ENCODE measurements at regions of chr4 and their contacts with region 1.

Region 1: DNA sequence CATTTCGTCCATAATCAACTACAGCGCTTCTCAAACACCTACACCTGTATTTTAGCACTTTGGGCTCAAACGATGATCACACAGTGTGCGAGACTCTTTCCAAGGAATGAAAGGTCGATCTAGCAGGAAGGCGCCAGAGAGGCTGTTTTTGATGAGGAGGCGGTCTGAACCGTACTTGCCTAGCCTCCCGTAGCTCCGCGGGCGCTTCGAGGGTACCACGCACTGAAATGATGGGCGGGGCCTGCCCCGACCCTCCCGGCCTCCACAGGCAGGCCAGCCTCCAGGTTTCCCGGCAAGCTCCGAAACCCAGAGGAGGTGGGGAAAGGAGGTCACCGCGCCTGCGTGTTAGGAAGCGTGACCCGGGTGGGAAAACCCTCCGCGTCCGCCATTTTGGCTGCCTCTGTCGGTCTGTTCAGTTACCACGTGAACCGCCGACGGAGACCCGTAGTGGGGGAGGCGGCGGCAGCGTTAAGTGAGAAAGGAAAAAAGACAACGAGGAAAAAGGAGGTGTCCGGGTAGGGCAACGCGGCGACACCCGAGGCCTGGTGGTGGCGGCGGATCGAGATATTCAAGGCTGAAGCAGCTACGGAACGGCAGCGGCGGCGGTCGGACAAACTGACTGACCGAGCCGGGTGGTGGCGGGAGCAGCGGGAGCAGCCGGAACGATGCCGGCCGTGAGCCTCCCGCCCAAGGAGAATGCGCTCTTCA is at the start of gene NAA15:
- DNase-seq: peak; percentile 97 to 98 (median 98)
- H3K4me3 ChIP-seq: peak within 1 kb of the TSS; percentile 90
- H3K4me3 Mint-ChIP-seq: peak within 1 kb of the TSS; percentile 96 to 100 (median 99)
- H3K27ac ChIP-seq: peak within 1 kb of the TSS; percentile 89
- H3K27ac Mint-ChIP-seq: peak within 1 kb of the TSS; percentile 97 to 100 (median 99)
- H3K4me1 ChIP-seq: peaks cover 34% of the 10 kb centered on the region
- H3K4me1 Mint-ChIP-seq: peaks cover 51 to 69% (median 68%) of the 10 kb centered on the region in 3 donors
- H3K27me3 ChIP-seq: no peaks in the 10 kb centered on the region
- H3K27me3 Mint-ChIP-seq: peaks cover 0 to 1% of the 10 kb centered on the region in 2 donors
- total RNA-seq, gene NAA15: 116 to 122 TPM

Region 2: GRCh38 chr4:139083956-139084803 is 217.1 kb before region 1 on chr4:
- CTCF ChIA-PET with region 1: interaction called, 6 read pairs
- POLR2A ChIA-PET with region 1: interaction called, 25 read pairs
- DNase-seq: peak; percentile 70 to 90 (median 83)
- H3K4me3 ChIP-seq: peak overlapping the region; percentile 98
- H3K4me3 Mint-ChIP-seq: peak overlapping the region; percentile 87 to 100 (median 92)
- H3K27ac ChIP-seq: peak overlapping the region; percentile 94
- H3K27ac Mint-ChIP-seq: peak overlapping the region; percentile 88 to 100 (median 98)
- H3K4me1 ChIP-seq: peaks cover 31% of the 10 kb centered on the region
- H3K4me1 Mint-ChIP-seq: peaks cover 38 to 52% (median 46%) of the 10 kb centered on the region in 3 donors
- H3K27me3 ChIP-seq: no peaks in the 10 kb centered on the region
- H3K27me3 Mint-ChIP-seq: peaks cover 0 to 4% of the 10 kb centered on the region in 2 donors

Region 3: DNA sequence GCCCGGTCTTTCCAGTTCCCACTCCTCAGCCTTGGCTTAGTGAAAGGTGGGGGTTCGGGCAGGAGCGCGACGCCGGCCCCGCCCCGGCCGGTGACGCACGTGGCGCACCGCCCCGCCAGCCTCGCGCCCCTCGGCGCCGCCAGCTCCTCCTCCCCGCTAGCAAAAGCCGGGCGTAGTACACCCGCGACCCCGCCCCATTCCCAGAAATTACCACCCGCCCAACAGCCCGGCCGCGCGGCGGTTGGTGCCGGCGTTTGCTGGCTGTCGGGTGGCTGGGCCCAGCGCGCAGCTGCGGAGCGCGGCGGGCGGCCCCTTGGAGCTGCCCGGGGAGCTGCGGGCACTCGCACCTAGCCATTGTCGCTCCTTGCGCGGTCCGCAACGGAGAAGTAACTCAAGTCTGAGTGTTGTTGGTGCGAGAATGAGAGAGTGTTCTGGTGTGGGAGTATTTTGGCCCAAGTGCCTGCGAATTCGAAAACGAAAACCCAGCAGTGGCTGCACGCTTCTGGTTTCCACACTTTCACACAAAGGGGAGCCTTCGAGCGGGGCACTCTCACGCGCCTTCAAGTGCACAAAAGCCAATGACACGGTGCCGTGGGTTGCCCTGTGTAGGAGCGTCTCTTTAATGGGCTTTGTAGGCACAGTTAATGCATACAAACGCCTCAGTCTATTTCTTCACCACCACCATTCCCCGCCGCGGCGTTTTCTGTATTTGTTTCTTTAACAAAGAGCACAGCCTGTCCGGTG is 123.2 kb before region 1 on chr4:
- CTCF ChIA-PET with region 1: interaction called, 6 read pairs
- POLR2A ChIA-PET with region 1: interaction called, 25 read pairs
- DNase-seq: peak; percentile 81 to 90 (median 89)
- H3K4me3 ChIP-seq: peak overlapping the region; percentile 96
- H3K4me3 Mint-ChIP-seq: peak overlapping the region; percentile 89 to 97 (median 92)
- H3K27ac ChIP-seq: peak overlapping the region; percentile 87
- H3K27ac Mint-ChIP-seq: peak overlapping the region; percentile 84 to 98 (median 94)
- H3K4me1 ChIP-seq: peaks cover 10% of the 10 kb centered on the region
- H3K4me1 Mint-ChIP-seq: peaks cover 21 to 28% (median 27%) of the 10 kb centered on the region in 3 donors
- H3K27me3 ChIP-seq: no peaks in the 10 kb centered on the region
- H3K27me3 Mint-ChIP-seq: no peaks in the 10 kb centered on the region

Region 4: DNA sequence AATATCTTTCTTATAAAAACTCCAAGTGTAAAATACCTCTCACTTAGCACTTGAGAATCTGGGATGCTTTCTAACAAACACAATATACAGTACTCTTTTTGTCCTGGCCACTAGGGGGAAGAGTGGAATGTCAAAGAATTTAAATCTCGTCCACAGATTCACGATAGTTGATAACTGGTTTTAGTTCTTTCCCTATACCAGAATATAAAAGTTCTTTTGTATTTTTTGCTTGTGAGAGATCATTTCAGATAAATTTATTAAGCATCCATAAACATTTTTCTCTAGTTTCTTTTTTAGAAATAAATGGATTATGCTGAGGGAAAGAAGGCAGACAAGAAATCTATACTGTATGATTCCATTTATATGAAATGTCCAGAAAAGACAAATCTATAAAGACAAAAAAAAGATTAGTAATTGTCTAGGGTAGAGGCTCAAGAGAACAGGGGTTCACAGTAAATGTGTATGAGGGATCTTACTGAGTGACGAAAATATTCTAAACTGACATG is 71.7 kb before region 1 on chr4:
- CTCF ChIA-PET with region 1: interaction called, 23 read pairs
- POLR2A ChIA-PET with region 1: interaction called, 7 read pairs
- DNase-seq: peak in 2 of 5 donors; percentile 34 to 45
- H3K4me3 ChIP-seq: no peak overlapping the region
- H3K4me3 Mint-ChIP-seq: no peak overlapping the region
- H3K27ac ChIP-seq: no peak overlapping the region
- H3K27ac Mint-ChIP-seq: no peak overlapping the region
- H3K4me1 ChIP-seq: no peaks in the 10 kb centered on the region
- H3K4me1 Mint-ChIP-seq: peaks cover 2 to 5% (median 5%) of the 10 kb centered on the region in 3 donors
- H3K27me3 ChIP-seq: no peaks in the 10 kb centered on the region
- H3K27me3 Mint-ChIP-seq: no peaks in the 10 kb centered on the region

Region 5: GRCh38 chr4:139453371-139454110 is 152.3 kb after region 1 on chr4:
- CTCF ChIA-PET with region 1: no interaction called
- POLR2A ChIA-PET with region 1: interaction called, 13 read pairs
- DNase-seq: peak; percentile 94 to 98 (median 97)
- H3K4me3 ChIP-seq: peak overlapping the region; percentile 92
- H3K4me3 Mint-ChIP-seq: peak overlapping the region; percentile 87 to 99 (median 96)
- H3K27ac ChIP-seq: peak overlapping the region; percentile 96
- H3K27ac Mint-ChIP-seq: peak overlapping the region; percentile 98 to 99 (median 99)
- H3K4me1 ChIP-seq: peaks cover 51% of the 10 kb centered on the region
- H3K4me1 Mint-ChIP-seq: peaks cover 61 to 65% (median 61%) of the 10 kb centered on the region in 3 donors
- H3K27me3 ChIP-seq: no peaks in the 10 kb centered on the region
- H3K27me3 Mint-ChIP-seq: peaks cover 0 to 2% of the 10 kb centered on the region in 2 donors

Region 6: DNA sequence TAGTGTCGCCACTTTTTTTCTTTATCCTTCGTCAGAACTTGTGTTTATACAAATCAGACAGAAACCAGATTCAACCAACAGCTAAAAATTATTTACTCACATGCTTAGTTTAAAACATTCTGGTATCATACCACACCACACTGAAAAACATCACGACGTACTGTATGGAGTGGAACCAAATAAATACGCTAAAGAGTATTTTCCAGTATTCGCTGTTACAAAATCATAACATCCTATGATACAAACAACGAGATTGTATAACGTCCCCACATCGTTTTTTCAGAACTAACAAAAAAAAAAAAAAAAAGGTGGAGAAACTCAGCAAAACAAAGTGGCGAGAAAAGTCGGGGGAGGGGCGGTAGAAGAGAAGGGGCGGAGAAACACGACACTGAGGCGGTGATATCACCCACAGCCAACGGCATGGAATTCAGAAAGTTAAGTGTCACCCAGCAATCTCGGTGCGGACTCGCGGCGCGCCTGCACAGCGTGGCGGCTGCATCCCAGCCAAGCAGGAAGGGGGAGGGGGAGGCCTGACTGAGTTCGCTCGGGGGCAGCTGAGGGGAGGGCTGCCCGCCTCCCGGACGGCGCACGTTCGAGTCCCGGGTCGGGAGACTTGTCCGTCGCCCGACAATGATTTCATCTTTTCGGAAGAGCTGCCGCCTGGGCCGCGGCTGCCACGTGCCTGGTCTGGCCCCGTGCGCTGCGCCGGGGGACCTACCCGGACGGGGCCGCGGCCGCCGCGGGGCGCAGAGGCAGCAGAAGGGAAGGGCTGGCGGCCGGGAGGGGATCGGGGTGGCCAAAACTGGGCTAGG is 253.8 kb after region 1 on chr4:
- CTCF ChIA-PET with region 1: interaction called, 4 read pairs
- POLR2A ChIA-PET with region 1: interaction called, 15 read pairs
- DNase-seq: peak; percentile 58 to 91 (median 76)
- H3K4me3 ChIP-seq: peak overlapping the region; percentile 81
- H3K4me3 Mint-ChIP-seq: peak overlapping the region; percentile 91 to 99 (median 97)
- H3K27ac ChIP-seq: peak overlapping the region; percentile 79
- H3K27ac Mint-ChIP-seq: peak overlapping the region; percentile 93 to 99 (median 96)
- H3K4me1 ChIP-seq: peaks cover 18% of the 10 kb centered on the region
- H3K4me1 Mint-ChIP-seq: peaks cover 39 to 74% (median 49%) of the 10 kb centered on the region in 3 donors
- H3K27me3 ChIP-seq: no peaks in the 10 kb centered on the region
- H3K27me3 Mint-ChIP-seq: peaks cover 4 to 13% of the 10 kb centered on the region in 2 donors

Measured in CD8-positive, alpha-beta memory T cell (primary cell).